T-cell (primary cell): ENCODE measurements at regions of chr16 and their contacts with region 1.

Region 1: GRCh38 chr16:87765776-87766484 is at the start of gene KLHDC4:
- DNase-seq: peak; percentile 79 to 94 (median 88)
- ATAC-seq: peak; percentile 73 to 82 (median 80)
- H3K4me3 ChIP-seq: peak within 1 kb of the TSS; percentile 76 to 97
- H3K4me3 Mint-ChIP-seq: peak within 1 kb of the TSS; percentile 92 to 100 (median 99)
- H3K27ac ChIP-seq: peak within 1 kb of the TSS; percentile 88
- H3K27ac Mint-ChIP-seq: peak within 1 kb of the TSS; percentile 98 to 99
- H3K4me1 ChIP-seq: peaks cover 26 to 52% of the 10 kb centered on the region in 2 experiments
- H3K4me1 Mint-ChIP-seq: peaks cover 44 to 48% (median 47%) of the 10 kb centered on the region in 3 donors
- H3K27me3 ChIP-seq: no peaks in the 10 kb centered on the region
- H3K27me3 Mint-ChIP-seq: no peaks in the 10 kb centered on the region
- total RNA-seq, gene KLHDC4: 104 to 136 (median 116) TPM

Region 2: DNA sequence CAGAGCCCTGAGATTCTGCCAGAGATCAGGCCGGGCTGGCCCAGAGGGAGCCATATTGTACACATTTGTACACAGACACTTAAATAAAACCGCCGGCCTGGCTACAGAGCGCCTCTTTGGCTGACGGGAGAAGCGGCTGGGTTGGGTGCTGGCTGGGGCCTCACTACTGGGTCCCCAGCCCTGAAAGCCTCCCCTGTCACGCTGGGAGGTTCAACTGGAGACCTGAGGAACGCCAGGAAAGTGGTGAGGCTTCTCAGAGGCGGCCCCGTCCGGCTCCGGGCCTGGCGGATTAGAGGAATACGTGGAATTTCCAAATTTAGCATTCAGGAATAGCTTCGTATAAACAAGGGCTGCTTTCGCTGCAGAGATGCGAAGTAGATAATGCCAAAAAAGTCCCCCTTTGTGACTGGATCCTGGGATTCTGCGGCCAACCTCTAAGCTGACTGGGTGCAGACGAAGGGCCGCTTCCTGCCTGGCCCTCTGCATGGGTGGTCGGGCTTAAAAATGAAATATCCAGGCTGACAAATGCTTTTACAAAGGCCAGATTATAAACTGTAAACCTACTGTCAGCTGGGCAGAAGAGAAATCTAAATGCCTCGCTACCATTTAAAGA is 1614.6 kb before region 1 on chr16:
- CTCF ChIA-PET with region 1: no interaction called
- POLR2A ChIA-PET with region 1: no interaction called
- DNase-seq: no peak
- ATAC-seq: no peak
- H3K4me3 ChIP-seq: no peak overlapping the region
- H3K4me3 Mint-ChIP-seq: no peak overlapping the region
- H3K27ac ChIP-seq: no peak overlapping the region
- H3K27ac Mint-ChIP-seq: no peak overlapping the region
- H3K4me1 ChIP-seq: no peaks in the 10 kb centered on the region
- H3K4me1 Mint-ChIP-seq: no peaks in the 10 kb centered on the region
- H3K27me3 ChIP-seq: peaks cover 2 to 36% of the 10 kb centered on the region in 2 experiments
- H3K27me3 Mint-ChIP-seq: peaks cover 20 to 31% of the 10 kb centered on the region in 2 donors

Region 3: GRCh38 chr16:87778830-87779579 is 13.1 kb after region 1 on chr16:
- CTCF ChIA-PET with region 1: interaction called in 1 of 2 experiments, 19 read pairs
- POLR2A ChIA-PET with region 1: no interaction called
- DNase-seq: peak; percentile 80 to 96 (median 88)
- ATAC-seq: peak; percentile 87 to 91 (median 88)
- H3K4me3 ChIP-seq: no peak overlapping the region
- H3K4me3 Mint-ChIP-seq: peak overlapping the region; percentile 5 to 78 (median 34)
- H3K27ac ChIP-seq: no peak overlapping the region
- H3K27ac Mint-ChIP-seq: peak overlapping the region; percentile 76 to 79
- H3K4me1 ChIP-seq: peaks cover 25 to 44% of the 10 kb centered on the region in 2 experiments
- H3K4me1 Mint-ChIP-seq: peaks cover 38 to 42% (median 41%) of the 10 kb centered on the region in 3 donors
- H3K27me3 ChIP-seq: peaks cover 0 to 8% of the 10 kb centered on the region in 2 experiments
- H3K27me3 Mint-ChIP-seq: no peaks in the 10 kb centered on the region

Region 4: GRCh38 chr16:87809150-87809902 is 43.4 kb after region 1 on chr16:
- CTCF ChIA-PET with region 1: no interaction called
- POLR2A ChIA-PET with region 1: no interaction called
- DNase-seq: no peak
- ATAC-seq: no peak
- H3K4me3 ChIP-seq: no peak overlapping the region
- H3K4me3 Mint-ChIP-seq: no peak overlapping the region
- H3K27ac ChIP-seq: no peak overlapping the region
- H3K27ac Mint-ChIP-seq: no peak overlapping the region
- H3K4me1 ChIP-seq: peaks cover 7 to 21% of the 10 kb centered on the region in 2 experiments
- H3K4me1 Mint-ChIP-seq: peaks cover 12 to 27% (median 17%) of the 10 kb centered on the region in 3 donors
- H3K27me3 ChIP-seq: peaks cover 0 to 13% of the 10 kb centered on the region in 2 experiments
- H3K27me3 Mint-ChIP-seq: peaks cover 0 to 2% of the 10 kb centered on the region in 2 donors

Region 5: GRCh38 chr16:87950765-87951549 is 185.0 kb after region 1 on chr16 and contains the start of gene BANP:
- CTCF ChIA-PET with region 1: interaction called in 1 of 2 experiments, 10 read pairs
- POLR2A ChIA-PET with region 1: interaction called in 1 of 2 experiments, 4 read pairs
- DNase-seq: peak; percentile 92 to 100 (median 97)
- ATAC-seq: peak; percentile 94 to 96 (median 96)
- H3K4me3 ChIP-seq: peak within 1 kb of the TSS; percentile 76 to 87
- H3K4me3 Mint-ChIP-seq: peak within 1 kb of the TSS; percentile 93 to 99 (median 95)
- H3K27ac ChIP-seq: peak within 1 kb of the TSS; percentile 95
- H3K27ac Mint-ChIP-seq: peak within 1 kb of the TSS; percentile 100
- H3K4me1 ChIP-seq: peaks cover 28 to 46% of the 10 kb centered on the region in 2 experiments
- H3K4me1 Mint-ChIP-seq: peaks cover 39 to 53% (median 41%) of the 10 kb centered on the region in 3 donors
- H3K27me3 ChIP-seq: peaks cover 0 to 18% of the 10 kb centered on the region in 2 experiments
- H3K27me3 Mint-ChIP-seq: peaks cover 2 to 3% of the 10 kb centered on the region in 2 donors
- total RNA-seq, gene BANP: 57.1 to 81.9 (median 69.4) TPM

Region 6: GRCh38 chr16:87963400-87963799 is 197.5 kb after region 1 on chr16:
- CTCF ChIA-PET with region 1: no interaction called
- POLR2A ChIA-PET with region 1: interaction called in 1 of 2 experiments, 10 read pairs
- DNase-seq: peak in 33 of 35 experiments; percentile 26 to 69 (median 47)
- ATAC-seq: peak; percentile 80 to 90 (median 88)
- H3K4me3 ChIP-seq: no peak overlapping the region
- H3K4me3 Mint-ChIP-seq: peak overlapping the region in 2 of 3 donors; percentile 55 to 63
- H3K27ac ChIP-seq: peak overlapping the region; percentile 8
- H3K27ac Mint-ChIP-seq: peak overlapping the region; percentile 16 to 79
- H3K4me1 ChIP-seq: peaks cover 19 to 56% of the 10 kb centered on the region in 2 experiments
- H3K4me1 Mint-ChIP-seq: peaks cover 75 to 81% (median 78%) of the 10 kb centered on the region in 3 donors
- H3K27me3 ChIP-seq: no peaks in the 10 kb centered on the region
- H3K27me3 Mint-ChIP-seq: no peaks in the 10 kb centered on the region